Psoas muscle (tissue), 8 donors: ENCODE measurements at regions of chr2 and their contacts with region 1.

Region 1: GRCh38 chr2:240434728-240435456 is 571 bp upstream of the GPC1 start:
- DNase-seq: peak; percentile 96 to 97
- ATAC-seq: peak; percentile 72 to 77 (median 74)
- H3K4me3 ChIP-seq: peak overlapping the region; percentile 91
- H3K27ac ChIP-seq: peak overlapping the region; percentile 96
- H3K4me1 ChIP-seq: peaks cover 21% of the 10 kb centered on the region
- H3K27me3 ChIP-seq: no peaks in the 10 kb centered on the region
- CTCF ChIP-seq: no peak

Region 2: GRCh38 chr2:239339726-239340601 is 1094.9 kb before region 1 on chr2:
- intact Hi-C with region 1: no loop called
- DNase-seq: no peak
- ATAC-seq: no peak
- H3K4me3 ChIP-seq: no peak overlapping the region
- H3K27ac ChIP-seq: no peak overlapping the region
- H3K4me1 ChIP-seq: no peaks in the 10 kb centered on the region
- H3K27me3 ChIP-seq: no peaks in the 10 kb centered on the region
- CTCF ChIP-seq: no peak

Region 3: DNA sequence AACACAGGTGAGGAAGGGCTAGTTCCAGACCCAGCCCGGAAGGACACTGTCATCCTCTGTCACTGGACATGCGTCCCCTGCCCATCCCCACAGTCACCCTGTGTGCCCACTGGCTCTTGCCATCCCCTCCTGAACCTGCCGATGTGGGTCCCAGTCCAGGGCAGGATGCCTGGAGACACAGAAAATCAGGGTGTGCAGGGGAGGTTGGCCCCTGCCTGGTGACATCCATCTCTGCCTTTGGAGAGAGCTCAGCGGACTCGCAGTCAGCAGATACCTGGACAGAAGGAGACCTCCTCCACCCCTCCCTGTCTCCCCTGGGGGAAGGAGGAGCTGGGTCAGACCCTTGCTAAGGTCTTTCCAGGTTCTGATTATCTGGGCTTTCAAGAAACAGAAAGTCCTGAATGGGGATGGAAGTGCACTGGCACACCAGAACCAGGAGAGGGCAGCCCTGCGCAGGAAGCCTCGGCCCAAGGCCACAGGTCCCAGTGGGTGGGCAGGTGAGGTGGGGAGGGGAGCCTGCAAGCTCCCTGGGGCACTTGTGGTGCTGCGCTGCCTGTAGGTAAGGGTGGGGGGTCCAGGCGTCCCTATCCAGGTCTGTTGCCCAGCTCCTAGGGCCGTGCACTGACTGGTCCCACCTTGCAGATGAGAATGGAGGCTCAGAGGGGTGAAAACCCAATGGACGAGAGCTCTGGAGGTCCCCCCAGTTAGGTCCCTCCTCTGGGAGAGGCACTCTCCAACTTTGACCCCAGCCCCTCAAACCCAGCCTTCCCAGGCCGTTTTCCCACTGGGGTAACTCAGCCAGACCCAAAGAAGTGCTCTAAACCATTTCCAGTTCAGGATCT is 284.7 kb before region 1 on chr2:
- intact Hi-C with region 1: loop called in 1 of 2 experiments (anchors 1 kb)
- DNase-seq: peak in 1 of 2 donors; percentile 24
- ATAC-seq: peak; percentile 56 to 75 (median 69)
- H3K4me3 ChIP-seq: no peak overlapping the region
- H3K27ac ChIP-seq: no peak overlapping the region
- H3K4me1 ChIP-seq: no peaks in the 10 kb centered on the region
- H3K27me3 ChIP-seq: no peaks in the 10 kb centered on the region
- CTCF ChIP-seq: peak; percentile 64

Region 4: DNA sequence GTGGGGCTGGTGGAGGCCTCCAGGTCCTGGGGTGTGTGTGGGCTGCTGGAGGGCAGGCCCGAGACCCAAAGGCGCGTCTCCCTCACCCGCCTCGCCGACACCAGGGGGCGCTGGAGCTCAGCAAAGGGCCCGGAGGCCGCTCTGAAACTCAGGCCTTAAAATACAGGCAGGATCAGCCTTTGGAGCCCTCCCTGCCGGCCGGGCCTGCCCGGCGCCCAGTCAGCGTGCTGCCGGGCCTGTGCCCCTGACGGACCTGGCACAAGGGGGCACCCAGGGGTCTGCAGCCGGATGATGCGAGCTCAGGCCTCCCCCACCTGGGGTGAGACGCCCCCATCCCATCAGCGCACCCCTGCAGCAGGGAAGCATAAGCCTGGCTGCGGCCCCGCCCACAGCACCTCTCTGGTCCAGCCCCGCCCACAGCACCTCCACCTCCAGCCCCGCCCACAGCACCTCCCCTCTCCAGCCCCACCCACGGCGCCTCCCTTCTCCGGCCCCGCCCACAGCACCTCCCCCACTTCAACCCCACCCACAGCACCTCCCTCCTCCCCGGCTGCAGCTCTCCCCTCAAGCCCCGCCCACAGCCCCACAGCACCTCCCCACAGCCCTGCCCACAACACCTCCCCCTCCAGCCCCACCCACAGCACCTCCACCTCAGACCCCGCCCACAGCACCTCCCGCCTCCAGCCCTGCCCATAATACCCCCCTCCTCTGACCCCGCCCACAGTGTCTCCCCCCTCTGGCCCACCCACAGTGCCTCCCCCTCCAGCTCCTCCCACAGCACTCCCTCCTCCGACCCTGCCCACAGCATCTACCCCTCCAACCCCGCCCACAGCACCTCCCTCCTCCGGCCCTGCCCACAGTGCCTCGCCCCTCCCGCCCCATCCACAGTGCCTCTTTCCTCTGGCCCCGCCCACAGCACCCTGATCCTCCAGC is 201.7 kb before region 1 on chr2:
- intact Hi-C with region 1: loop called (anchors 1 to 2 kb)
- DNase-seq: peak; percentile 89 to 96
- ATAC-seq: peak; percentile 78 to 84 (median 80)
- H3K4me3 ChIP-seq: peak overlapping the region; percentile 53
- H3K27ac ChIP-seq: peak overlapping the region; percentile 93
- H3K4me1 ChIP-seq: peaks cover 34% of the 10 kb centered on the region
- H3K27me3 ChIP-seq: no peaks in the 10 kb centered on the region
- CTCF ChIP-seq: peak; percentile 97

Region 5: GRCh38 chr2:240369801-240370585 is 64.9 kb before region 1 on chr2:
- intact Hi-C with region 1: loop called in 1 of 2 experiments (anchors 5 kb)
- DNase-seq: peak; percentile 89 to 95
- ATAC-seq: peak; percentile 80 to 86 (median 84)
- H3K4me3 ChIP-seq: no peak overlapping the region
- H3K27ac ChIP-seq: peak overlapping the region; percentile 94
- H3K4me1 ChIP-seq: peaks cover 72% of the 10 kb centered on the region
- H3K27me3 ChIP-seq: no peaks in the 10 kb centered on the region
- CTCF ChIP-seq: no peak

Region 6: GRCh38 chr2:240387669-240388358 is 47.1 kb before region 1 on chr2:
- intact Hi-C with region 1: loop called (anchors 2 kb)
- DNase-seq: peak; percentile 79 to 92
- ATAC-seq: peak; percentile 65 to 81 (median 76)
- H3K4me3 ChIP-seq: peak overlapping the region; percentile 48
- H3K27ac ChIP-seq: peak overlapping the region; percentile 68
- H3K4me1 ChIP-seq: peaks cover 37% of the 10 kb centered on the region
- H3K27me3 ChIP-seq: no peaks in the 10 kb centered on the region
- CTCF ChIP-seq: no peak

Region 7: GRCh38 chr2:240624950-240625621 is 190.2 kb after region 1 on chr2 and contains the start of gene GPR35:
- intact Hi-C with region 1: no loop called
- DNase-seq: peak; percentile 19 to 62
- ATAC-seq: peak in 1 of 4 donors; percentile 10
- H3K4me3 ChIP-seq: no peak within 1 kb of the TSS
- H3K27ac ChIP-seq: no peak within 1 kb of the TSS
- H3K4me1 ChIP-seq: no peaks in the 10 kb centered on the region
- H3K27me3 ChIP-seq: no peaks in the 10 kb centered on the region
- CTCF ChIP-seq: no peak
- total RNA-seq, gene GPR35: 0.36 to 0.92 (median 0.68) TPM